Stomach (tissue), 19 donors: ENCODE measurements at regions of chr13 and their contacts with region 1.

Region 1: GRCh38 chr13:95296326-95296925 is 4.8 kb downstream of the ABCC4 start:
- DNase-seq: peak; percentile 61 to 72
- H3K4me3 ChIP-seq: no peak overlapping the region
- H3K27ac ChIP-seq: no peak overlapping the region
- H3K4me1 ChIP-seq: peaks cover 11 to 44% (median 33%) of the 10 kb centered on the region in 4 donors
- H3K27me3 ChIP-seq: no peaks in the 10 kb centered on the region
- CTCF ChIP-seq: peak in 5 of 7 experiments; percentile 50 to 88 (median 67)
- EP300 ChIP-seq: no peak
- POLR2A ChIP-seq: no peak

Region 2: GRCh38 chr13:95191821-95192563 is 104.4 kb before region 1 on chr13:
- intact Hi-C with region 1: loop called (anchors 10 kb)
- DNase-seq: peak; percentile 73 to 90
- H3K4me3 ChIP-seq: no peak overlapping the region
- H3K27ac ChIP-seq: no peak overlapping the region
- H3K4me1 ChIP-seq: peaks cover 0 to 4% (median 0%) of the 10 kb centered on the region in 4 donors
- H3K27me3 ChIP-seq: no peaks in the 10 kb centered on the region
- CTCF ChIP-seq: peak in 5 of 7 experiments; percentile 54 to 76 (median 75)
- EP300 ChIP-seq: no peak
- POLR2A ChIP-seq: no peak

Region 3: GRCh38 chr13:95378603-95379002 is 82.2 kb after region 1 on chr13:
- intact Hi-C with region 1: loop called (anchors 5 kb)
- DNase-seq: no peak
- H3K4me3 ChIP-seq: no peak overlapping the region
- H3K27ac ChIP-seq: no peak overlapping the region
- H3K4me1 ChIP-seq: peaks cover 5 to 12% (median 10%) of the 10 kb centered on the region in 4 donors
- H3K27me3 ChIP-seq: no peaks in the 10 kb centered on the region
- CTCF ChIP-seq: no peak
- EP300 ChIP-seq: no peak
- POLR2A ChIP-seq: no peak